GM10248 (cell line): ENCODE measurements at regions of chr6 and their contacts with region 1.

Region 1: GRCh38 chr6:10448096-10448495 is 33.2 kb upstream of the TFAP2A start:
- DNase-seq: no peak
- CTCF ChIP-seq: no peak

Region 2: DNA sequence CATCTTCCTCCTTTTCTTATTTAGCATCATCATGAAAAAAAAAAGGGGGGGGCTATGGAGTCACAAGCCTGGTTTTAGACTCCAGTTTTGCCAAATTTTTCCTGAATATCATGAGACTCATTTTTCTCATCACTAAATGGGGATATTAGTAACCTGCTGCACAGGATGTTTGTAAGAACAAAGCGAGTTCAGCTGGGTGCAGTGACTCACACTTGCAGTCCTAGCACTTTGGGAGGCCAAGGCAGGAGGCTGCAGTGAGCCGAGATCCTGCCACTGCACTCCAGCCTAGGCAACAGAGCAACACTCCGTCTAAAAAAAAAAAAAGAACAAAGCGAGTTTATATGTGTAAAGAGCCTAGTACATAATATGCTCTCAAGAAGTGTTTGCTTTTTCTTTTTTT is 116.0 kb before region 1 on chr6:
- CTCF ChIA-PET with region 1: no interaction called
- POLR2A ChIA-PET with region 1: no interaction called
- DNase-seq: no peak
- CTCF ChIP-seq: no peak

Region 3: DNA sequence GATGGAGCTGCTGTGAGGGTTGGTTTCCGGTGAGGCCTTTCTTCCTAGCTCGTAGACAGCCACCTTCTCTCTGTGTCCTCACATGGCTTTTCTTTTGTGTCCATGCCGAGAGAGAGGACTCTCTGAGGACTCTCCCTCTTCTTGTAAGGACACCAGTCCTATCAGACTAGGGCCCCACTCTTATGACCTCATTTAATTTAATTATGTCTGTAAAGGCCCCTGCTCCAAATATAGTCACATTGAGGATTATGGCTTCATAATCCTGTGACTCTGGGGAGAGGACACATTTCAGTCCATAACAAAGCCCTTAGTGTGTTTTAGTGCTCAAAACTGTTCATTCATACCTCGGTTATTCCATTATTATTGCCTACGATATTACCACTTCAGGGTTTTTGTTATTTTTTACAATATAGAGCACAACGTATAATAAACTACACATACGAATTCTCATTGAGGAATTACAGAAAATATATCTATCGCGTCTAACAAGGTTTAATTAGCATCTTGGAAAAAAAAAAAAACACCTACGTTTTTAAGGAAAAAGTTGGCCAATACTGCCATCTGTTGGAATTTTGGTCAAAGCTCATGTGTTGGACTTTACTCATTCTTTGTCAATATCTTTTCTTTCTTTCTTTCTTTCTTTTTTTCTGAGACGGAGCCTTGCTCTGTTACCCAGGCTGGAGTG is 13.3 kb before region 1 on chr6:
- CTCF ChIA-PET with region 1: interaction called, 39 read pairs
- POLR2A ChIA-PET with region 1: no interaction called
- DNase-seq: no peak
- CTCF ChIP-seq: peak; percentile 47